Left cardiac atrium (tissue), 4 donors: ENCODE measurements at regions of chr2 and their contacts with region 1.

Region 1: DNA sequence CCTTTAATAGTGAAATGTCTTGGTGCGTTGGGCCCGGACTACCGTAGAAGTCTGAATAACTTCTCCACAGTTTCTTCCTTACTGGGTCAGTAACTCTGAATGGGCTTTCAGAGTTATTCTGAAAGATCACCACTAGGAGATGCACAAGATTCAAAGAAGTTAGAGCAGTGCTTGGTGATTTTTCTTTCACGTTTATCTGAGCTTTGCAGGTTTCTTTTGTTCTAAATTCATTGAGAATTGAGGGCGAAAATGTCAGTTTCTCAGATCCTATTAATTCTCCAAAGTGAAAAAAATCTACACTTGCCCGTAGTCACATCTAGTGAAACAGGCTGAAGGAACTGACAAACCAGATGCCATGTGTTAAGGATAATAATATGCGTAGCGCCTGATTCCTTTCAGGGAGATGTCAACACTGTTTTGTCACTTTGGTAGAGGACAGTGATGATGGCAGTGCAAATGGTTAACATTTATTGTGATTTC is 70.1 kb downstream of the QPCT start:
- DNase-seq: no peak
- ATAC-seq: peak; percentile 84 to 85

Region 2: GRCh38 chr2:37357530-37357929 is 57.0 kb before region 1 on chr2:
- intact Hi-C with region 1: no loop called
- DNase-seq: no peak
- ATAC-seq: no peak

Region 3: GRCh38 chr2:37549598-37549997 is 135.1 kb after region 1 on chr2:
- intact Hi-C with region 1: no loop called
- DNase-seq: no peak
- ATAC-seq: no peak

Region 4: DNA sequence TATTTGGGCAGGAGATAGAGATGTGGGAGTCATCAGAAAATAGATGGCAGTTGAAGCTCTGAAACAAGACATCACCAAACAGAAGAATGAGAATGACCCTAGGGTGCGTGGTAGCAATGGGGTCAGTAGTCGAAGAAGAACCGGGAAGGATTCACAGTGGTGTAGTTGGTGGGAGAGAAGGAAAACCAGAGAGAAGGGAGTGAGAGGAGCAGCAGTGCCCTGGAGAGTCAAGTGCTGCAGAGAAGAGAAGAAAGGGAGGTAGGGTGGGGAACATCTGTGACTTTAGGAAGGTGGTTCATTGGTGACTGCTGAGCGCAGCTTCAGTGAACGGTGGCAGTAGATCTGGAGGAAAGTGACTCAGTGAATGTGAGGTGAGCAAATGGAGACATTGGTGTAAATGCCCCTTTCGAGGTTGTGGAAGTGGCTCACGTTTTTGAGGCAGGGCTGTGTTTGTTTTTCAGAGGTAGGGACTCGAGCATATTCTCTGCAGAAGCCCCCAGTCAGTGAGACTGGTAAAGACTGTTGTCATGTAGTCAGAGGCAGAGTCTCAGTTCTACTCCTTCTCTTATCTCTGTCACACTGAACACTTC is 220.5 kb after region 1 on chr2:
- intact Hi-C with region 1: loop called in 1 of 2 experiments (anchors 5 kb)
- DNase-seq: no peak
- ATAC-seq: no peak

Region 5: DNA sequence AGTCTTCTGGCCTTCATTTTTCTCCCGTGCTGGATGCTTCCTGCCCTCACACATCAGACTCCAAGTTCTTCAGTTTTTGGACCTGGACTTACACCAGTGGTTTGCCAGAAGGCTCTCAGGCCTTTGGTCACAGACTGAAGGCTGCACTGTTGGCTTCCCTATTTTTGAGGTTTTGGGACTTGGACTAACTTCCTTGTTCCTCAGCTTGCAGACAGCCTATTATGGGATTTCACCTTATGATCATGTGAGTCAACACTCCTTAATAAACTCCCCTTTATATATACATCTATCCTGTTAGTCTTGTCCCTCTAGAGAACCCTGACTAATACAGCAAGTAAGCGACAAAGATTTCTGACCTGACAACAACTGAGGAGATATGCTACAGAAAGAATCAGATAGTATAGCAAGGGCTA is 249.7 kb after region 1 on chr2:
- intact Hi-C with region 1: loop called in 1 of 2 experiments (anchors 10 kb)
- DNase-seq: no peak
- ATAC-seq: no peak